Naive thymus-derived CD4-positive, alpha-beta T cell (primary cell): ENCODE measurements at regions of chr1 and their contacts with region 1.

Region 1: DNA sequence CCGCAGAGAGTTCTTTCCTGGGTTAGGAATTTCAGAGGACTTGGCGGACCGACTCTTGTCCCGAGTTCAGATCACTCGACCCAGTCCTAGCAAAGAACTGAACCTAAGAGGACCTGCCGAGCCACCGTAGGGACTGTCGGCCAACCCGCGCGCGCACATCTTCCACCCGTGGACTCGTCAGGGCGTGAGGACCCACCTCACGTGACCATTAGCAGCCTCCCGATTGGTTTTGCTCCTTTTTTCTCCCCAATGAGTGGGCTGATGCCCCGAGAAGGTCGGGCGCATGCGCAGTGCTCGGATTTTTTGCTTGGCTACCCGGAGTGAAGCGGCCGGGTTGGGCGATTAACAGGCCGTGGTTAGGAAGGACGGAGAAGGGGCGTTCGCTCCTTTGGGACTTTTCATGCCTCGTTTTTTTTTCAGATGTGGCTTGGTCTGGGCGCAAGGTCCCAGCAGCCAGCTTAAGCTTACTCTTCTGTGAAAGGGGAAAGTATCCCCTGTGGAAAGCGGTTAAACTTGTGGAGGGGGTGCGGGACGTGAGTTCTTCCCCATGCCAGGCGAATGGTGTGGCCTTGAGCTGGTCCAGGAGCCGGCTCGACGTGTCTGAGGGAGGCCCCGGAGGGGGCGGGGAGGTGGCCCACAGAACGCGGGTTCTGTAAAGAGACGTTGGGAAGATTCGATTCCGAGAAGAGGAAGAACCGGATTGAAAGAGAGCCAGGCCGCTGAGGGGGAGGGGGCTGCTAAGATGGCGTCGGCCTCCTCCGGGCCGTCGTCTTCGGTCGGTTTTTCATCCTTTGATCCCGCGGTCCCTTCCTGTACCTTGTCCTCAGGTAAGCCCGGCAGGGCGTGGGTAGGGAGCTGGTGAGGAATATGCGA is at the start of gene PIP5K1A:
- DNase-seq: peak; percentile 96 to 99 (median 97)
- ATAC-seq: peak; percentile 98
- H3K4me3 ChIP-seq: peak within 1 kb of the TSS; percentile 83
- H3K4me3 Mint-ChIP-seq: peak within 1 kb of the TSS; percentile 93 to 100 (median 98)
- H3K27ac ChIP-seq: peak within 1 kb of the TSS; percentile 88
- H3K27ac Mint-ChIP-seq: peak within 1 kb of the TSS; percentile 95 to 99 (median 98)
- H3K4me1 ChIP-seq: peaks cover 11% of the 10 kb centered on the region in 2 donors
- H3K4me1 Mint-ChIP-seq: peaks cover 31 to 56% (median 46%) of the 10 kb centered on the region in 7 donors
- H3K27me3 ChIP-seq: no peaks in the 10 kb centered on the region
- H3K27me3 Mint-ChIP-seq: peaks cover 0 to 12% (median 0%) of the 10 kb centered on the region in 5 donors
- total RNA-seq, gene PIP5K1A: 56.9 to 76.5 (median 59.5) TPM

Region 2: GRCh38 chr1:151098126-151098525 is 100.4 kb before region 1 on chr1:
- CTCF ChIA-PET with region 1: interaction called, 11 read pairs
- POLR2A ChIA-PET with region 1: interaction called, 7 read pairs
- intact Hi-C with region 1: no loop called
- DNase-seq: no peak
- ATAC-seq: no peak
- H3K4me3 ChIP-seq: no peak overlapping the region
- H3K4me3 Mint-ChIP-seq: no peak overlapping the region
- H3K27ac ChIP-seq: no peak overlapping the region
- H3K27ac Mint-ChIP-seq: peak overlapping the region in 1 of 9 donors; percentile 25
- H3K4me1 ChIP-seq: no peaks in the 10 kb centered on the region
- H3K4me1 Mint-ChIP-seq: peaks cover 0 to 3% (median 0%) of the 10 kb centered on the region in 7 donors
- H3K27me3 ChIP-seq: no peaks in the 10 kb centered on the region
- H3K27me3 Mint-ChIP-seq: peaks cover 0 to 7% (median 0%) of the 10 kb centered on the region in 5 donors

Region 3: DNA sequence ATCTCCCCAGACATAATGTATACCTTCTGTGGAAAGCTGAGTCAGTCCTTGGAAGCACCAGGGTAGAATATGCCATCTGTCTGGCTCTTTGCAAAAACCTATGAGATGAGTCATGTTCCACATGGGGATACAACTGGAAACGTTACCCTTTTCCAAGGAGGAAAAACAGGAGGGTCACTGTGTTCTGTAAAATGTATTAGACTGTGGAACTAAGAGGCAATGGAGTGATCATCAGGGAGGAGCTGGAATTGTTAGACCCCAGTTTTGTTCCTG is 39.9 kb after region 1 on chr1:
- CTCF ChIA-PET with region 1: no interaction called
- POLR2A ChIA-PET with region 1: no interaction called
- intact Hi-C with region 1: no loop called
- DNase-seq: no peak
- ATAC-seq: no peak
- H3K4me3 ChIP-seq: no peak overlapping the region
- H3K4me3 Mint-ChIP-seq: no peak overlapping the region
- H3K27ac ChIP-seq: no peak overlapping the region
- H3K27ac Mint-ChIP-seq: peak overlapping the region in 1 of 9 donors; percentile 46
- H3K4me1 ChIP-seq: no peaks in the 10 kb centered on the region
- H3K4me1 Mint-ChIP-seq: peaks cover 0 to 2% (median 0%) of the 10 kb centered on the region in 7 donors
- H3K27me3 ChIP-seq: no peaks in the 10 kb centered on the region
- H3K27me3 Mint-ChIP-seq: no peaks in the 10 kb centered on the region

Region 4: DNA sequence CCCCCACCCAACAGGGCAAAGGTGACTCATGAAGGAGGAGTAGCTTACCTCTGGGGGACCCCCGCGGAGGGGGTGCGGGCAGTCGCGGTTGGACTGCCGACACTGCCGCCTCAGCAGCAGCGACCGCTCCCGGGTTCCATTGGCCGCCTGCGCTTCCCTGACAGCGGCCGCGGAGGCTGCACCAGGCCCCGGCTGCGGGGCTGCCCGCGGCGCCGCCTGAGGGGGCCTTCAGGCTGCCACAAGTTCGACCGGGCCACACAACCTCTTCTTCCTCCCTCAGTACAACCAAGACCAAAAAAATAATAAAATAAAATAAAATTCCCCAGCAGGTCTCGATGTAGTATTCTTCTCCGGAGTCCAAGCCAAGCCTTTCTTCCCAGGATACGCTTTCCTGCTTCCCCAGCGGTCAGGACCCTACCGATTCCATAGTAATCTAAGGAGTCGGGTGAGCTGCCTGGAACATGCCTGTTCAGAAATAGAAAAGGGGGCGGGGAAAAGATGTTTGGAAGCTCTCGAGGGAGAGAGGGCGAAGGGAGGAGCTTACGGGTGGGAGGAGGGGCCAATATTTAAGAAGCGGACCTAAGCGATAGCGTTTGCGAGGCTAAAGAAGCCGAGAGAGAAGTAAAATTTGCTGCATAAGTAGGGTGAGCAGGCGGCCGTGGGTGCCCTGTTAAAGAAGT is 128.9 kb after region 1 on chr1 and contains the start of gene PI4KB:
- CTCF ChIA-PET with region 1: no interaction called
- POLR2A ChIA-PET with region 1: interaction called, 3 read pairs
- intact Hi-C with region 1: loop called (anchors 1 kb)
- DNase-seq: peak; percentile 72 to 96 (median 93)
- ATAC-seq: peak; percentile 96
- H3K4me3 ChIP-seq: peak within 1 kb of the TSS; percentile 72
- H3K4me3 Mint-ChIP-seq: peak within 1 kb of the TSS; percentile 91 to 100 (median 96)
- H3K27ac ChIP-seq: peak within 1 kb of the TSS; percentile 96
- H3K27ac Mint-ChIP-seq: peak within 1 kb of the TSS; percentile 90 to 100 (median 97)
- H3K4me1 ChIP-seq: peaks cover 6 to 18% of the 10 kb centered on the region in 2 donors
- H3K4me1 Mint-ChIP-seq: peaks cover 14 to 53% (median 44%) of the 10 kb centered on the region in 7 donors
- H3K27me3 ChIP-seq: no peaks in the 10 kb centered on the region
- H3K27me3 Mint-ChIP-seq: peaks cover 0 to 2% (median 0%) of the 10 kb centered on the region in 5 donors
- total RNA-seq, gene PI4KB: 64.0 to 91.9 (median 76.3) TPM

Region 5: DNA sequence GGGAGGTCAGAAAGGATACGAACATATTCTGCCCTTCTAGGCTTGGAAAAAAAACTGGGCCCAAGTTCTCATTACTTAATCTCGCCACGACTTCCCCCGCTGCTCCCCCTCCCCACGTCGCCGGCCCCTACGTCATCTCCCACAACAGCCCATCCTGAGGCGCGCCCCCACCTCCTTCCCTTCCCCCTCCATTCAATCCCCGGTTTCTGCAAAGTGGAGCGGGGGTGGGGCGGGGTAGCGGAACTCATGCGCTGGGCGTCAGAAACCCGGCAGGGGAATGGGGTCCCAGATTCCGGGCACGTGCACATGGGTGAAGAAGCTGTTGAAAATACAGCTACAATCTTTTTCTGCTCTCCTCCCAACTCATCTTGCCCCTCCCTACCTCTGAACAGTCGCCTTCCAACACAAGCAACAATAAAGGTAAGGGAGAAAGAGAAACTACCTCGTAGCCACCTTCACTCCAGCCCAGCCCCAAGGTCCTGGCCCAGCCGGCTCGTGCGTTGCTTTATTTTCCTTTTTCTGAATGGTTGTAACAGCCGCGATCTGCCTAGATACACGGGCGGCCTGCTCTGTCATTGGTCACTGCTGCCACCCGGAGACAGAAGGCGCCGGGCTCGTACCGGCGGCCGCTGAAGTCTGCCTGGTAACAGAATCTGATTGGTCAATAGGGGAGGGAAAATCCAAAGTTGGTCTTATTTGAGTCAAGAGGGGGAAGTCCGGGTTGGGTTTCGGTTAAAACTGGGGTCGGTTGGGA is 148.5 kb after region 1 on chr1 and contains the start of gene RFX5:
- CTCF ChIA-PET with region 1: no interaction called
- POLR2A ChIA-PET with region 1: no interaction called
- intact Hi-C with region 1: loop called in 1 of 2 experiments (anchors 1 kb)
- DNase-seq: peak; percentile 73 to 98 (median 94)
- ATAC-seq: peak; percentile 95
- H3K4me3 ChIP-seq: peak within 1 kb of the TSS; percentile 75
- H3K4me3 Mint-ChIP-seq: peak within 1 kb of the TSS; percentile 85 to 98 (median 95)
- H3K27ac ChIP-seq: peak within 1 kb of the TSS; percentile 96
- H3K27ac Mint-ChIP-seq: peak within 1 kb of the TSS; percentile 95 to 100 (median 99)
- H3K4me1 ChIP-seq: peaks cover 13 to 16% of the 10 kb centered on the region in 2 donors
- H3K4me1 Mint-ChIP-seq: peaks cover 20 to 44% (median 39%) of the 10 kb centered on the region in 7 donors
- H3K27me3 ChIP-seq: no peaks in the 10 kb centered on the region
- H3K27me3 Mint-ChIP-seq: no peaks in the 10 kb centered on the region
- total RNA-seq, gene RFX5: 62.6 to 89.3 (median 82.2) TPM